ENCODE measurements at regions of chr10 and their contacts with region 1.

Region 1: GRCh38 chr10:451021-451471 is 238.4 kb downstream of the DIP2C start:
- DNase-seq: peak; percentile 17 to 87 (median 85)
- ATAC-seq: peak; percentile 97
- H3K4me3 ChIP-seq: peak overlapping the region; percentile 31
- H3K4me3 Mint-ChIP-seq: peak overlapping the region; percentile 65 to 85 (median 80)
- H3K27ac ChIP-seq: peak overlapping the region; percentile 52
- H3K27ac Mint-ChIP-seq: peak overlapping the region; percentile 72 to 95 (median 89)
- H3K4me1 ChIP-seq: peaks cover 25 to 54% of the 10 kb centered on the region in 2 donors
- H3K4me1 Mint-ChIP-seq: peaks cover 9 to 76% (median 64%) of the 10 kb centered on the region in 7 donors
- H3K27me3 ChIP-seq: no peaks in the 10 kb centered on the region
- H3K27me3 Mint-ChIP-seq: peaks cover 0 to 21% (median 0%) of the 10 kb centered on the region in 5 donors

Region 2: GRCh38 chr10:329361-330099 is 121.5 kb before region 1 on chr10:
- CTCF ChIA-PET with region 1: no interaction called
- POLR2A ChIA-PET with region 1: interaction called, 3 read pairs
- intact Hi-C with region 1: loop called in 1 of 2 experiments (anchors 5 kb)
- DNase-seq: peak in 3 of 9 donors; percentile 10 to 15 (median 13)
- ATAC-seq: peak; percentile 31
- H3K4me3 ChIP-seq: no peak overlapping the region
- H3K4me3 Mint-ChIP-seq: peak overlapping the region; percentile 54 to 85 (median 70)
- H3K27ac ChIP-seq: peak overlapping the region; percentile 16
- H3K27ac Mint-ChIP-seq: peak overlapping the region; percentile 8 to 95 (median 79)
- H3K4me1 ChIP-seq: peaks cover 20 to 25% of the 10 kb centered on the region in 2 donors
- H3K4me1 Mint-ChIP-seq: peaks cover 21 to 53% (median 31%) of the 10 kb centered on the region in 7 donors
- H3K27me3 ChIP-seq: no peaks in the 10 kb centered on the region
- H3K27me3 Mint-ChIP-seq: no peaks in the 10 kb centered on the region

Region 3: DNA sequence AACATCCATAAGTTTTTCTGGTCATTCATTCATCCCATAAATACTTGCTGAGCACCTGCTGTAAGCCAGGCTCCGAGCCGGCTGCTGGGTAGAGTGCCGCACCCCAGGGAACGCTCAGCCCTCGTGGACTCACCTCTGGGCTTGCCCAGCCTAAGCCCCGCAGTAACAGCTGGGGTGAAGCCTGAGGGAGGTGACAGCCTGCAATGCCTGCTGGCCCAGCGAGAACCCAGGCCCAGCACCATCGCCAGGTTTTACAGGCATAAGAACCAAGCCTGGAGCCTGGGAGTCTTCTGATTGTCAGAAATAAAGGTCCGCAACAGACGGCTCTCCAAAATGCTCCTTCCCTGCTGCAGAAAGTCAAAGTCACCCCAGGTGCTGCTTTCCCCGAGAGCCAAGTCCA is 110.4 kb before region 1 on chr10:
- CTCF ChIA-PET with region 1: no interaction called
- POLR2A ChIA-PET with region 1: no interaction called
- intact Hi-C with region 1: no loop called
- DNase-seq: no peak
- ATAC-seq: no peak
- H3K4me3 ChIP-seq: no peak overlapping the region
- H3K4me3 Mint-ChIP-seq: no peak overlapping the region
- H3K27ac ChIP-seq: no peak overlapping the region
- H3K27ac Mint-ChIP-seq: no peak overlapping the region
- H3K4me1 ChIP-seq: no peaks in the 10 kb centered on the region
- H3K4me1 Mint-ChIP-seq: peaks cover 0 to 7% (median 0%) of the 10 kb centered on the region in 7 donors
- H3K27me3 ChIP-seq: no peaks in the 10 kb centered on the region
- H3K27me3 Mint-ChIP-seq: no peaks in the 10 kb centered on the region

Region 4: GRCh38 chr10:436911-437665 is 14.0 kb before region 1 on chr10:
- CTCF ChIA-PET with region 1: interaction called, 3 read pairs
- POLR2A ChIA-PET with region 1: interaction called, 5 read pairs
- intact Hi-C with region 1: loop called in 1 of 2 experiments (anchors 2 kb)
- DNase-seq: no peak
- ATAC-seq: no peak
- H3K4me3 ChIP-seq: peak overlapping the region; percentile 1
- H3K4me3 Mint-ChIP-seq: peak overlapping the region; percentile 2 to 60 (median 40)
- H3K27ac ChIP-seq: no peak overlapping the region
- H3K27ac Mint-ChIP-seq: peak overlapping the region in 3 of 9 donors; percentile 17 to 70 (median 24)
- H3K4me1 ChIP-seq: peaks cover 19 to 25% of the 10 kb centered on the region in 2 donors
- H3K4me1 Mint-ChIP-seq: peaks cover 21 to 64% (median 47%) of the 10 kb centered on the region in 7 donors
- H3K27me3 ChIP-seq: peaks cover 0 to 4% of the 10 kb centered on the region in 2 donors
- H3K27me3 Mint-ChIP-seq: peaks cover 0 to 14% (median 0%) of the 10 kb centered on the region in 5 donors

Region 5: GRCh38 chr10:484441-484924 is 33.4 kb after region 1 on chr10:
- CTCF ChIA-PET with region 1: interaction called, 7 read pairs
- POLR2A ChIA-PET with region 1: interaction called, 28 read pairs
- intact Hi-C with region 1: loop called (anchors 1 to 2 kb)
- DNase-seq: peak in 5 of 9 donors; percentile 5 to 35 (median 22)
- ATAC-seq: peak; percentile 59
- H3K4me3 ChIP-seq: peak overlapping the region; percentile 64
- H3K4me3 Mint-ChIP-seq: peak overlapping the region; percentile 73 to 95 (median 86)
- H3K27ac ChIP-seq: peak overlapping the region; percentile 76
- H3K27ac Mint-ChIP-seq: peak overlapping the region; percentile 88 to 99 (median 94)
- H3K4me1 ChIP-seq: no peaks in the 10 kb centered on the region
- H3K4me1 Mint-ChIP-seq: peaks cover 5 to 25% (median 13%) of the 10 kb centered on the region in 7 donors
- H3K27me3 ChIP-seq: no peaks in the 10 kb centered on the region
- H3K27me3 Mint-ChIP-seq: no peaks in the 10 kb centered on the region

Region 6: GRCh38 chr10:511101-511848 is 60.2 kb after region 1 on chr10:
- CTCF ChIA-PET with region 1: interaction called, 3 read pairs
- POLR2A ChIA-PET with region 1: no interaction called
- intact Hi-C with region 1: loop called in 1 of 2 experiments (anchors 2 kb)
- DNase-seq: peak; percentile 55 to 88 (median 71)
- ATAC-seq: peak; percentile 85
- H3K4me3 ChIP-seq: no peak overlapping the region
- H3K4me3 Mint-ChIP-seq: peak overlapping the region in 6 of 10 donors; percentile 1 to 41 (median 23)
- H3K27ac ChIP-seq: no peak overlapping the region
- H3K27ac Mint-ChIP-seq: peak overlapping the region in 4 of 9 donors; percentile 9 to 89 (median 64)
- H3K4me1 ChIP-seq: no peaks in the 10 kb centered on the region
- H3K4me1 Mint-ChIP-seq: peaks cover 7 to 30% (median 13%) of the 10 kb centered on the region in 7 donors
- H3K27me3 ChIP-seq: no peaks in the 10 kb centered on the region
- H3K27me3 Mint-ChIP-seq: peaks cover 0 to 9% (median 4%) of the 10 kb centered on the region in 5 donors

Region 7: DNA sequence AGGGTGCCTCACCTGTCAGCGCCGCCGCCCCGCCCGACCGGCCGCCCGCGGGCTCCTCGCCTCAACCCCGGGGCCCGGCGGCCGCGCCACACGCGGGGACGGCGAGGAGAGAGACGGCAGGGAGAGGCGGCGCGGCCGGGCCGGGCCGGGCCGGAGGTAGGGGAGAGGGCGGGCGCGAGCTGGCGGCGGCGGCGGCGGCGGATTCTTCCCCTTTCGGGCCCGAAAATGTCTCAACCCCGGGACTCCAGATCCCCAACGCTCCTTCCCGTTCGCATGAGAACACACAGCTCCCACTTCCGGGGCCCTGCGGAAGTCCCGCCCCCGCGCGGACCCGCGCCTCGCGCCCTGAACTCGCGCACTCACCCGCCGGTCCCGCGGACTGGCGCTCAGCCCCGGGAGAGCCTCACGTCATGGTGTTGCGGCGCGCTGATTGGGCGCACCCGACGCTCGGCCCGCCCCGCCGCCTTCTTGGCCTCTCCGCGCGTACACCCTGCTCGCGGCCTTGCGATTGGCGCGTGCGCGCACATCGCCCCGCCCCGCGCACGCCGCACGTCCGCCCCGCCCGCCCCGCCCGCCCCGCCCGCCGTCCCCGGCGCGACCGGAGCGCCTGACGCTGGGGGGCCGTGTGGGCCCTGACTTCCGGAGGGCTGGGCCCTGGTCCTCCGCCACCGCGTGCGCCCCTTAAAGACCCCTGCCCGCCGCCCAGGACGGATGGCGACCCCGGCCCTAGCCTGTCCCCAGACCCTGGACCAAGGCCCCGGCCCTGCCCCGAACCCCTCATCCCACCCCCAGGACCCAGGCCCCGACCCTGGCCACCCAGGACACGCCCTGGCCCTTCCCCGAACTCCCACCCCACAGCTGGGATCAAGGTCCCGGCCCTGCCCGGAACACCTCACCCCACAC is 480.6 kb after region 1 on chr10 and contains the start of gene LARP4B:
- CTCF ChIA-PET with region 1: no interaction called
- POLR2A ChIA-PET with region 1: no interaction called
- intact Hi-C with region 1: loop called in 1 of 2 experiments (anchors 5 kb)
- DNase-seq: peak; percentile 95 to 99 (median 98)
- ATAC-seq: peak; percentile 98
- H3K4me3 ChIP-seq: peak within 1 kb of the TSS; percentile 42
- H3K4me3 Mint-ChIP-seq: peak within 1 kb of the TSS; percentile 82 to 99 (median 94)
- H3K27ac ChIP-seq: peak within 1 kb of the TSS; percentile 96
- H3K27ac Mint-ChIP-seq: peak within 1 kb of the TSS; percentile 91 to 96 (median 94)
- H3K4me1 ChIP-seq: peaks cover 9 to 12% of the 10 kb centered on the region in 2 donors
- H3K4me1 Mint-ChIP-seq: peaks cover 26 to 48% (median 41%) of the 10 kb centered on the region in 7 donors
- H3K27me3 ChIP-seq: no peaks in the 10 kb centered on the region
- H3K27me3 Mint-ChIP-seq: no peaks in the 10 kb centered on the region
- total RNA-seq, gene LARP4B: 65.2 to 114 (median 96.9) TPM